ENCODE measurements at regions of chr10 and their contacts with region 1.

Region 1: DNA sequence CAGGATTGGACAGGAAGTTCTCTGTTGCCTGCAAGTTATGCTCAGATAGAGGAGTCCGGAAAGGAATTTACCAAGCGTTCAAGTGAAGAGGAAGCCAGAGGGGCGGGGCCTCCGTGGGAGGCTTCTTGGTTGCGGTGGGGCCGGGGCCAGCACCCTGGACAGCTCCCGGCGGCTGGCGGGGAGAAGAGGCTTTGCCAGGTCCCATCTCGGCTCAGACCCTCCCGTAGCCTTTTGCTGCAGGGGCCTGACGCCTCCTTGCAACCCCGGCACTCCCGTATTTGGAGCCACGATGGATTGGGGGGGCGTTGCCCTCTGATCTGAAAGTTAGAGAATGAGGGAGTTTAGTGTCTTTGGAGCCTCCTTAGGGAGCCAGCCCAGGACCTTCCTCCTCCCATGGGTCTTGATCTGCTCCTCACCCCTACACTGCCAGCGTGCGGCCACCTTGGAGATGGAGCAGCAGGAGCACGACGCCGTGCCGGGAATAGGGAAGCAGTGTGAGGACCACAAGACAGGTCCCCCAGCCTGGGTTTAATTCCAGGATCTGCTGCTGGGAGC is 3.1 kb upstream of the SLC18A3 start:
- DNase-seq: peak; percentile 81
- H3K4me3 Mint-ChIP-seq: no peak overlapping the region
- H3K27ac Mint-ChIP-seq: no peak overlapping the region
- H3K4me1 Mint-ChIP-seq: peaks cover 3% of the 10 kb centered on the region
- H3K27me3 Mint-ChIP-seq: peaks cover 64% of the 10 kb centered on the region

Region 2: DNA sequence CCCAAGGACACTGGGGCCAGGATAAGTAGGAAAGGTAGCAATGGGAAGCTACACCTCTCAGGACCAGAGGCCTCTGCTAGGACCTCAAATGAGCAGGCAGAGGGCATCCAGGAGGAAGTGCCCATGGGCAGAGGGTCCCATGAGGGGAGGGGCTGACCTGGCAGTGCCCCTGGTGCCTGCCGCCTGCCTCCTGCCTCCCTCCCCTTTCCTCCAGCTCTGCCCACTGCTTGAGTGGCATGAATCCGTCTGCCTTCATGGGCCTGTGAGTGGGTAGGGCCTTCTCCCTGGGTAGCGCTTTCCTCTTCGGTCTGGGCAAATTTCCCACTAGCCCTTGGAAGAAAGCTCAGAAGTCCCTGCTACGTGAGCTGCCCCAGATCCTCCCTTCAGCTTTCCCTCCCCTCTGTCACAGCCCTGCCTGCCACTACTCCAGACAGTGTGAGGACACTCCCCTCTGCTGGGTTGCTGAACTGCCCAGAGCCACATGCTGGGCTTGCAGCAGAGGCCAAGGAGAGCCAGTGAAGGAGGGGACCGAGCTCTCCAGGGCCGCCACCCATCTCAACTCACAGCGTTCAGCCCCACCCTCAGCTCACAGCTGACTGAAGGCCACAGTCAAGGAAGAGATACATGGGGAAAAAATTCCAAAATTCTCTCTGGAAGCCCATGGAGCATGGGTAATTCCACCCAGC is 1143.6 kb before region 1 on chr10:
- CTCF ChIA-PET with region 1: no interaction called
- intact Hi-C with region 1: no loop called
- DNase-seq: no peak
- H3K4me3 Mint-ChIP-seq: no peak overlapping the region
- H3K27ac Mint-ChIP-seq: no peak overlapping the region
- H3K4me1 Mint-ChIP-seq: no peaks in the 10 kb centered on the region
- H3K27me3 Mint-ChIP-seq: no peaks in the 10 kb centered on the region

Region 3: GRCh38 chr10:49398000-49398861 is 208.8 kb before region 1 on chr10:
- CTCF ChIA-PET with region 1: no interaction called
- intact Hi-C with region 1: loop called (anchors 1 kb)
- DNase-seq: peak; percentile 63
- H3K4me3 Mint-ChIP-seq: peak overlapping the region; percentile 32
- H3K27ac Mint-ChIP-seq: no peak overlapping the region
- H3K4me1 Mint-ChIP-seq: peaks cover 16% of the 10 kb centered on the region
- H3K27me3 Mint-ChIP-seq: peaks cover 70% of the 10 kb centered on the region

Region 4: DNA sequence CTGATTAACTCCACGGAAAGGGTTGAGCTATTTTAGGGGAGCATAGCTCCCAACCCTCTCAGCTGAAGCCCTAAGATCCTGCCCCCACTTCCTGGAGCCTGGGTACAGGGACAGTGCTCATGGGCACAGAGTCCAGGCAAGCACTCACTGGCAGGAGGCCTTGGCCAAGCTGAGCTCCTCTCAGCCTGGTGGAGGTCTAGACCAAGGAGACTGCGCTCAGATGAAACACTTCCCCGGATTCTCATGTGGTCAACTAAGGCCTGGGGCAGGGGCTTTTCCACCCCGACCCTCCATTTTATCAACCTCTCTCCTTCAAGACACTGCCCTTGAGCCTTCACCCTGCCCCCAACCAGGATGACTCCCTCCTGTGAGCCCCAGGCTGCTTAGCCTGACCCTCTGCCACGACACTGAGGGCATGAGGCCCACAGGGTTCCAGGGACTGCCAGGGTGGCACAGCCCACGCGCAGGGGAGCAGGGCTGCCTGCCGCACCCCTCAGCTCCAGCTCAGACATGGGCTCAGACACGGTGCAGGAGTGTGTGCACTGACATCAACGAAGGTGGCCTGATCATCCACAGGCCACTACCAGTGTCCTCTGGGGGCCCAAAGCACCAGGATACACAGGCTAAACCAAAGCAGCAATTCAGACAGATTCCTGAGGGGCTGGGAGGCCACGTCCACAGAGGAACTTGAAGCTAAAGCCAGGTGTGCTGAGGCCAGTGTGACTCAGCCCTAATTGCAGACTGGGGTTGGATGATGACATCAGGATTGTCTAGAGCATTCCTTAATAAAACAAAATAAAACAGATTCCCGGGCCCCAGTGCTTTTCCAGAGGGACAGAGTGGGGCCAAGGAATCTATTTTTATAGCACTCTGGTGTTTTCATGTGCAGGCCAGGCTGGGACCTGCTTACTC is 25.6 kb after region 1 on chr10:
- CTCF ChIA-PET with region 1: no interaction called
- intact Hi-C with region 1: no loop called
- DNase-seq: no peak
- H3K4me3 Mint-ChIP-seq: no peak overlapping the region
- H3K27ac Mint-ChIP-seq: no peak overlapping the region
- H3K4me1 Mint-ChIP-seq: no peaks in the 10 kb centered on the region
- H3K27me3 Mint-ChIP-seq: no peaks in the 10 kb centered on the region

Region 5: GRCh38 chr10:49761789-49762565 is 154.9 kb after region 1 on chr10 and contains the start of gene OGDHL:
- CTCF ChIA-PET with region 1: no interaction called
- intact Hi-C with region 1: loop called (anchors 1 kb)
- DNase-seq: peak; percentile 57
- H3K4me3 Mint-ChIP-seq: peak within 1 kb of the TSS; percentile 21
- H3K27ac Mint-ChIP-seq: no peak within 1 kb of the TSS
- H3K4me1 Mint-ChIP-seq: peaks cover 8% of the 10 kb centered on the region
- H3K27me3 Mint-ChIP-seq: peaks cover 44% of the 10 kb centered on the region
- total RNA-seq, gene OGDHL: 0.12 to 0.37 TPM